Naive thymus-derived CD4-positive, alpha-beta T cell (primary cell): ENCODE measurements at regions of chr5 and their contacts with region 1.

Region 1: GRCh38 chr5:132495667-132496190 is 5.2 kb upstream of the IRF1 start:
- DNase-seq: peak in 7 of 9 donors; percentile 42 to 79 (median 54)
- ATAC-seq: peak; percentile 48
- H3K4me3 ChIP-seq: peak overlapping the region; percentile 91
- H3K4me3 Mint-ChIP-seq: peak overlapping the region; percentile 86 to 99 (median 97)
- H3K27ac ChIP-seq: peak overlapping the region; percentile 99
- H3K27ac Mint-ChIP-seq: peak overlapping the region; percentile 90 to 99 (median 97)
- H3K4me1 ChIP-seq: peaks cover 48 to 57% of the 10 kb centered on the region in 2 donors
- H3K4me1 Mint-ChIP-seq: peaks cover 36 to 79% (median 68%) of the 10 kb centered on the region in 7 donors
- H3K27me3 ChIP-seq: no peaks in the 10 kb centered on the region
- H3K27me3 Mint-ChIP-seq: no peaks in the 10 kb centered on the region

Region 2: GRCh38 chr5:132394667-132395259 is 101.0 kb before region 1 on chr5:
- CTCF ChIA-PET with region 1: interaction called, 243 read pairs
- POLR2A ChIA-PET with region 1: interaction called, 122 read pairs
- intact Hi-C with region 1: no loop called
- DNase-seq: no peak
- ATAC-seq: no peak
- H3K4me3 ChIP-seq: no peak overlapping the region
- H3K4me3 Mint-ChIP-seq: peak overlapping the region in 6 of 10 donors; percentile 6 to 73 (median 34)
- H3K27ac ChIP-seq: peak overlapping the region; percentile 35
- H3K27ac Mint-ChIP-seq: peak overlapping the region in 8 of 9 donors; percentile 68 to 94 (median 87)
- H3K4me1 ChIP-seq: peaks cover 19 to 65% of the 10 kb centered on the region in 2 donors
- H3K4me1 Mint-ChIP-seq: peaks cover 48 to 94% (median 82%) of the 10 kb centered on the region in 7 donors
- H3K27me3 ChIP-seq: no peaks in the 10 kb centered on the region
- H3K27me3 Mint-ChIP-seq: peaks cover 0 to 10% (median 0%) of the 10 kb centered on the region in 5 donors